PC-9 (cell line): ENCODE measurements at regions of chr3 and their contacts with region 1.

Region 1: GRCh38 chr3:52220380-52221026 is 4.9 kb downstream of the TLR9 start:
- DNase-seq: peak; percentile 67 to 87
- H3K4me3 ChIP-seq: no peak overlapping the region
- H3K27ac ChIP-seq: no peak overlapping the region
- H3K4me1 ChIP-seq: peaks cover 53% of the 10 kb centered on the region
- H3K27me3 ChIP-seq: no peaks in the 10 kb centered on the region
- CTCF ChIP-seq: peak; percentile 85

Region 2: DNA sequence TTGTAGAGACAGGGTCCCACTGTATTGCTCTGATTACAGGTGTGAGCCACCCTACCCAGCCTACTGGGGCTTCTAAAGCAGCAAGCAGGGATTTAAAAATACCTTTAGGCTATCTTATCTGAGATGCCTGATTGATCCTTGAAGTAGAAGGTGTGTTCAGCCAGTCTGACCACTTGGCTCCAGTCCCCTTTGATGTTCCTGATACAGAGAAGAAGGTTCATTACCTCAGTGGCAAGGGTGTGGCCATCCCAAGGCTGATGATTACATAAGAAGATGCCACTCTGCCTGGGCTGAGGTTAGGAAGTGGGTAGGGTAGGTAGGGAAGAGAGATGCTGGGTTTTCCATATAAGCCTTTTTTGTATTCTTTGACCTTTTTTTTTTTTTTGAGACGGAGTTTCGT is 709.5 kb before region 1 on chr3:
- CTCF ChIA-PET with region 1: no interaction called
- POLR2A ChIA-PET with region 1: no interaction called
- intact Hi-C with region 1: no loop called
- DNase-seq: peak in 1 of 2 experiments; percentile 67
- H3K4me3 ChIP-seq: no peak overlapping the region
- H3K27ac ChIP-seq: no peak overlapping the region
- H3K4me1 ChIP-seq: no peaks in the 10 kb centered on the region
- H3K27me3 ChIP-seq: no peaks in the 10 kb centered on the region
- CTCF ChIP-seq: no peak

Region 3: GRCh38 chr3:51974963-51975851 is 245.3 kb before region 1 on chr3 and contains the start of gene ABHD14A:
- CTCF ChIA-PET with region 1: interaction called, 10 read pairs
- POLR2A ChIA-PET with region 1: no interaction called
- intact Hi-C with region 1: no loop called
- DNase-seq: peak in 1 of 2 experiments; percentile 76
- H3K4me3 ChIP-seq: peak within 1 kb of the TSS; percentile 97
- H3K27ac ChIP-seq: 0 out of 2 replicates have a peak within 1 kb of the TSS, but pooled peaks have one; percentile 5
- H3K4me1 ChIP-seq: peaks cover 8% of the 10 kb centered on the region; the same call in 1 of the 2 replicates
- H3K27me3 ChIP-seq: no peaks in the 10 kb centered on the region
- CTCF ChIP-seq: no peak
- total RNA-seq, gene ABHD14A: 7.1 and 9.9 TPM in 2 replicates

Region 4: GRCh38 chr3:52154117-52155094 is 66.1 kb before region 1 on chr3 and contains the start of gene POC1A:
- CTCF ChIA-PET with region 1: interaction called, 3 read pairs
- POLR2A ChIA-PET with region 1: interaction called, 6 read pairs
- intact Hi-C with region 1: loop called (anchors 1 kb)
- DNase-seq: peak; percentile 93
- H3K4me3 ChIP-seq: peak within 1 kb of the TSS; percentile 90
- H3K27ac ChIP-seq: peak within 1 kb of the TSS; percentile 68
- H3K4me1 ChIP-seq: peaks cover 16% of the 10 kb centered on the region
- H3K27me3 ChIP-seq: no peaks in the 10 kb centered on the region
- CTCF ChIP-seq: no peak; the same call in 1 of the 2 replicates
- total RNA-seq, gene POC1A: 28.8 and 35.0 TPM in 2 replicates

Region 5: DNA sequence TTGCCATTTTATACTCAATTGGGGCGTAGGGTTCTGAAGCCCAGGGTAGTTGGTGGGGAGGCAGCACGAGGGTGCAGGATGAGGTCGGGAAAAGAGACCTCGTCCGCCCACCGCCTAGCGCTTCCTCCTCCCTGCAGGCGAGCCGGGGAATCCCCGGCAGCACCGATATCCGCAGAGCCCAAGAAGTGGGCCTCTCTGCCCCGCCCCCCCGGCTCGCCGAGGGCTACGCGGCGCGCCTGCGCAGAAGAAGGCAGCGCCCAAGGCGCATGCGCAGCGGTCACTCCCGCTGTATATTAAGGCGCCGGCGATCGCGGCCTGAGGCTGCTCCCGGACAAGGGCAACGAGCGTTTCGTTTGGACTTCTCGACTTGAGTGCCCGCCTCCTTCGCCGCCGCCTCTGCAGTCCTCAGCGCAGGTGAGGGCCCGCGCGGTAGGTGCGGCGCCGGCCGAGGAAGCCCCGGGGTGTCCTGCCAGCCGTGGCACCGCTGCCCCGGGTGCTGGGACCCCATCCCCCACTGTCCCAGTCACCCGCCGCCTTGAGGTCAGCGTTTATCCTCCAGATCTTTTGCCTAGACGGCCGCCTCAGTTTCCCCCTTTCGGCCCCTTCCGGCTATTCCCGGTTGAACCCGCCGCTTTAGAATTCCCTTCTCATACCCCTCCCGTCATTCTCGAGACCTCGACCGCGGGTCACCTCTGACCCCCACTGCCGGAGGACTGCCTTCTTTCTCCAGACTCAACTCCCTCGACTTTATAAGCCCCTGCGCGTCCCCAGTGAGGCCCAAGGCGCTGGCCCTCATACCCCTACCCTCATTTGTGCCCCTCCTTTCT is 22.4 kb before region 1 on chr3 and contains the start of gene ALAS1:
- CTCF ChIA-PET with region 1: interaction called, 16 read pairs
- POLR2A ChIA-PET with region 1: no interaction called
- intact Hi-C with region 1: no loop called
- DNase-seq: peak; percentile 74 to 95
- H3K4me3 ChIP-seq: peak within 1 kb of the TSS; percentile 93
- H3K27ac ChIP-seq: no peak within 1 kb of the TSS
- H3K4me1 ChIP-seq: peaks cover 25% of the 10 kb centered on the region
- H3K27me3 ChIP-seq: no peaks in the 10 kb centered on the region
- CTCF ChIP-seq: no peak
- total RNA-seq, gene ALAS1: 61.9 and 71.2 TPM in 2 replicates

Region 6: GRCh38 chr3:52291508-52292181 is 71.1 kb after region 1 on chr3:
- CTCF ChIA-PET with region 1: no interaction called
- POLR2A ChIA-PET with region 1: interaction called, 20 read pairs
- intact Hi-C with region 1: loop called (anchors 5 kb)
- DNase-seq: peak in 1 of 2 experiments; percentile 21
- H3K4me3 ChIP-seq: no peak overlapping the region
- H3K27ac ChIP-seq: no peak overlapping the region
- H3K4me1 ChIP-seq: peaks cover 7% of the 10 kb centered on the region; the same call in 1 of the 2 replicates
- H3K27me3 ChIP-seq: no peaks in the 10 kb centered on the region
- CTCF ChIP-seq: peak; percentile 64

Region 7: GRCh38 chr3:52570076-52570475 is 349.6 kb after region 1 on chr3:
- CTCF ChIA-PET with region 1: interaction called, 15 read pairs
- POLR2A ChIA-PET with region 1: no interaction called
- intact Hi-C with region 1: no loop called
- DNase-seq: peak in 1 of 2 experiments; percentile 39
- H3K4me3 ChIP-seq: no peak overlapping the region
- H3K27ac ChIP-seq: no peak overlapping the region
- H3K4me1 ChIP-seq: peaks cover 10% of the 10 kb centered on the region; the same call in 1 of the 2 replicates
- H3K27me3 ChIP-seq: no peaks in the 10 kb centered on the region
- CTCF ChIP-seq: no peak

Region 8: GRCh38 chr3:52925405-52926313 is 705.2 kb after region 1 on chr3:
- CTCF ChIA-PET with region 1: no interaction called
- POLR2A ChIA-PET with region 1: no interaction called
- intact Hi-C with region 1: no loop called
- DNase-seq: no peak
- H3K4me3 ChIP-seq: no peak overlapping the region
- H3K27ac ChIP-seq: no peak overlapping the region
- H3K4me1 ChIP-seq: no peaks in the 10 kb centered on the region
- H3K27me3 ChIP-seq: no peaks in the 10 kb centered on the region
- CTCF ChIP-seq: no peak